ENCODE measurements at regions of chr12 and their contacts with region 1.

Region 1: GRCh38 chr12:93742110-93742934 is 65.1 kb downstream of the CRADD start:
- DNase-seq: peak; percentile 91
- ATAC-seq: peak; percentile 96
- H3K4me3 ChIP-seq: peak overlapping the region; percentile 62
- H3K27ac ChIP-seq: peak overlapping the region; percentile 95
- H3K4me1 ChIP-seq: peaks cover 23% of the 10 kb centered on the region
- H3K27me3 ChIP-seq: no peaks in the 10 kb centered on the region
- CTCF ChIP-seq: peak; percentile 26

Region 2: GRCh38 chr12:93407054-93407962 is 335.0 kb before region 1 on chr12:
- intact Hi-C with region 1: no loop called
- DNase-seq: no peak
- ATAC-seq: no peak
- H3K4me3 ChIP-seq: no peak overlapping the region
- H3K27ac ChIP-seq: no peak overlapping the region
- H3K4me1 ChIP-seq: peaks cover 9% of the 10 kb centered on the region
- H3K27me3 ChIP-seq: no peaks in the 10 kb centered on the region
- CTCF ChIP-seq: no peak

Region 3: GRCh38 chr12:93569656-93570551 is 172.4 kb before region 1 on chr12:
- intact Hi-C with region 1: loop called (anchors 5 kb)
- DNase-seq: peak; percentile 93
- ATAC-seq: peak; percentile 81
- H3K4me3 ChIP-seq: peak overlapping the region; percentile 99
- H3K27ac ChIP-seq: peak overlapping the region; percentile 85
- H3K4me1 ChIP-seq: no peaks in the 10 kb centered on the region
- H3K27me3 ChIP-seq: peaks cover 4% of the 10 kb centered on the region
- CTCF ChIP-seq: peak; percentile 82

Measured in upper lobe of right lung (tissue), 1 donor.